WTC11 (cell line): ENCODE measurements at regions of chr16 and their contacts with region 1.

Region 1: DNA sequence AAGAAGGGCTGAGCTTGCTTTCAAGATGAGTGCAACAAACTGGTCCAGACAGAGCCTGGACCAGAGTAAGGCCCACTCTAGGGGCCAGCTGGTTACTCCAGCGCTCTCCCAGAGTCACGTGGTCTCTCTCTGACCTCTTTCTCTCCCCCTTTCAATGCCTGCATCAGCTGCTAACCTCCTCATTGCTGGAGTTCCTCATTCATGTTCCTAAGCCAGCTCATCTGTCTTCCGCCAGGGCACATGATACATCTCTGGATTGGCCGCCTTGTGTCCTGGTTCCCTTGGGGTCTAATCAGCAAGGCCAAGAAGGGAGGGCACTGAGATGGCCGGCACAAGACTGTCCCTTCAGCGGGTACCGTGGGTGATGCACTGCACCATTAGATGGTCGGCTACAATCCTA is 26.9 kb upstream of the ZFP90 start:
- DNase-seq: no peak
- ATAC-seq: no peak
- H3K4me3 Mint-ChIP-seq: no peak overlapping the region
- H3K27ac Mint-ChIP-seq: no peak overlapping the region
- H3K4me1 Mint-ChIP-seq: 0 out of 2 replicates have a peak, but pooled peaks cover 3% of the 10 kb centered on the region
- H3K27me3 Mint-ChIP-seq: peaks cover 15% of the 10 kb centered on the region
- CTCF ChIP-seq: no peak

Region 2: DNA sequence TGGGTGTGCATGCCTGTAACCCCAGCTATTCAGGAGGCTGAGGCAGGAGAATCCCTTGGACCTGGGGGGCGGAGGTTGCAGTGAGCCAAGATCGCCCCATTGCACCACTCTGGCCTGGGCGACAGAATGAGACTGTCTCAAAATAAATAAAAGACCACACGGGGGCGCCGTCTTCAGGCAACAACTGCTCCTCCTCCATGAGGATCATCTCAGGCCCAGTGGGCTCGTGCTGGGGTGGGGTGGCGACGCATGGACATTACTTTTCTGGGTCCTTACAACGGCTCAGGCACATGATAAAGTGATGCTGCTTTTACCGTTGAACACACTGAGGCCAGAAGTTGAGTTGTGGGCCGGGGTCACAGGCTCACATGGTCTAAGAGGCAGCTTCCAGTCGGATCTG is 145.2 kb before region 1 on chr16:
- CTCF ChIA-PET with region 1: interaction called, 38 read pairs
- POLR2A ChIA-PET with region 1: no interaction called
- DNase-seq: peak; percentile 75
- ATAC-seq: peak; percentile 69
- H3K4me3 Mint-ChIP-seq: no peak overlapping the region
- H3K27ac Mint-ChIP-seq: 0 out of 2 replicates have a peak overlapping the region, but pooled peaks have one; percentile 76
- H3K4me1 Mint-ChIP-seq: peaks cover 30% of the 10 kb centered on the region
- H3K27me3 Mint-ChIP-seq: peaks cover 2% of the 10 kb centered on the region; the same call in 1 of the 2 replicates
- CTCF ChIP-seq: peak; percentile 32; the same call in 1 of the 2 replicates

Region 3: DNA sequence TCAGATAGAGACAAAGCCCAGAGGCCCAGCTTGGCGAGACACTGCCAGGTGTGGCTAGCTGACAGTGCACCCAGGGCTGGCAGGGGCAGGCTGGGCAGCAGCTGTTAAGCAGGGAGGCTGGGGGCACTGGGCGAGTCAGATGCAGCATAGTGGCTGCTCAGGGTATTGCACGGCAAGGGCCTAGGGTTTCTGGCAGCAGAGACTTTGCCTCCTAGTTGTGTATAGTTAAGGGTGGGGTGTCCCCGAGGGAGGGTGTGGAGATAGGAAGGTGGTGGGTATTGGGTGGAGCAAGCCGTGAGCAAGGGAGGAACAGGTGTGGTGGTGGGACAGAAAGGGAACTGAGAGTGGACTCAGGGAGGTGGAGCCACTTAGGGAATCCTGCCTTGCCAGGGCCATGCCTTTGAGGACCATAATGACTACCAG is 129.9 kb before region 1 on chr16:
- CTCF ChIA-PET with region 1: interaction called, 10 read pairs
- POLR2A ChIA-PET with region 1: no interaction called
- DNase-seq: peak; percentile 59
- ATAC-seq: peak; percentile 82
- H3K4me3 Mint-ChIP-seq: no peak overlapping the region
- H3K27ac Mint-ChIP-seq: no peak overlapping the region
- H3K4me1 Mint-ChIP-seq: peaks cover 36% of the 10 kb centered on the region
- H3K27me3 Mint-ChIP-seq: no peaks in the 10 kb centered on the region
- CTCF ChIP-seq: peak; percentile 56

Region 4: DNA sequence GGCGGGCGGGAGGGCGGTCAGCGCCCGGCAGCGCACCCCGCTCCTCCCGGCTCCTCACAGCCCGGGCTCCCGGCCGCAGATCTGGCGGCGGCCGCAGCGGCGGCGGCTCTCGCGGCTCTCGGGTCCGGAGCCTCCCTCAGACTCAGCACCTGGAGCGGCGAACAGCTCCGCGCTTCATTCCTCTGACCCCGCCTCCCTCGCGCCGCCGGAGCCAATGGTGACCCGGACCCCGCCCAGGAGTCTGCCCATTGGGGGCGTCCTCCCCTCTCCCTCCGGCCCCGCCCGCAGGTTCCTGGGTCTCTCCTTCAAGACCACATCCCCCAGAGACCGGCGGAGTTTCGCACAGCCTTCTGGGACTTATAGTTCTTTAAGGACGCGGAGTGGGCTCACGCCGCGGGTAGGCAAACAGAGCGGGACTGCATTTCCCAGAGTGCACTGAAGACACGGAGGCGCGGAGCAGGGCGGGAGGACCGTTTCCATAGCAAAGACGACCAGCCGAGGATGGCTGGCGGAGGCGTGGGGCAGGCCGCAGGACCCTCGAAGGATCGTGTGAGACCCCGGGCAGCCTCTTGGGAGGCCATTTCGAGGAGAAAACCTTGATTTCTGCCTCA is 63.7 kb before region 1 on chr16 and contains the start of gene SMPD3:
- CTCF ChIA-PET with region 1: interaction called, 25 read pairs
- POLR2A ChIA-PET with region 1: no interaction called
- DNase-seq: peak; percentile 100
- ATAC-seq: peak; percentile 94
- H3K4me3 Mint-ChIP-seq: peak within 1 kb of the TSS; percentile 85
- H3K27ac Mint-ChIP-seq: no peak within 1 kb of the TSS
- H3K4me1 Mint-ChIP-seq: peaks cover 10% of the 10 kb centered on the region
- H3K27me3 Mint-ChIP-seq: peaks cover 34% of the 10 kb centered on the region
- CTCF ChIP-seq: no peak
- total RNA-seq, gene SMPD3: 0.99 to 1.4 TPM (median 1.2 TPM) in 3 replicates

Region 5: GRCh38 chr16:68486502-68487202 is 25.5 kb before region 1 on chr16:
- CTCF ChIA-PET with region 1: interaction called, 10 read pairs
- POLR2A ChIA-PET with region 1: no interaction called
- DNase-seq: no peak
- ATAC-seq: peak; percentile 25; the same call in 1 of the 2 replicates
- H3K4me3 Mint-ChIP-seq: no peak overlapping the region
- H3K27ac Mint-ChIP-seq: no peak overlapping the region; the same call in 1 of the 2 replicates
- H3K4me1 Mint-ChIP-seq: peaks cover 28% of the 10 kb centered on the region
- H3K27me3 Mint-ChIP-seq: peaks cover 3% of the 10 kb centered on the region; the same call in 1 of the 2 replicates
- CTCF ChIP-seq: no peak

Region 6: GRCh38 chr16:68528686-68529379 is 16.6 kb after region 1 on chr16:
- CTCF ChIA-PET with region 1: interaction called, 27 read pairs
- POLR2A ChIA-PET with region 1: no interaction called
- DNase-seq: peak; percentile 91
- ATAC-seq: peak; percentile 81
- H3K4me3 Mint-ChIP-seq: peak overlapping the region; percentile 78
- H3K27ac Mint-ChIP-seq: no peak overlapping the region
- H3K4me1 Mint-ChIP-seq: peaks cover 15% of the 10 kb centered on the region
- H3K27me3 Mint-ChIP-seq: peaks cover 50% of the 10 kb centered on the region
- CTCF ChIP-seq: peak; percentile 98